ENCODE measurements at regions of chr1 and their contacts with region 1.

Region 1: DNA sequence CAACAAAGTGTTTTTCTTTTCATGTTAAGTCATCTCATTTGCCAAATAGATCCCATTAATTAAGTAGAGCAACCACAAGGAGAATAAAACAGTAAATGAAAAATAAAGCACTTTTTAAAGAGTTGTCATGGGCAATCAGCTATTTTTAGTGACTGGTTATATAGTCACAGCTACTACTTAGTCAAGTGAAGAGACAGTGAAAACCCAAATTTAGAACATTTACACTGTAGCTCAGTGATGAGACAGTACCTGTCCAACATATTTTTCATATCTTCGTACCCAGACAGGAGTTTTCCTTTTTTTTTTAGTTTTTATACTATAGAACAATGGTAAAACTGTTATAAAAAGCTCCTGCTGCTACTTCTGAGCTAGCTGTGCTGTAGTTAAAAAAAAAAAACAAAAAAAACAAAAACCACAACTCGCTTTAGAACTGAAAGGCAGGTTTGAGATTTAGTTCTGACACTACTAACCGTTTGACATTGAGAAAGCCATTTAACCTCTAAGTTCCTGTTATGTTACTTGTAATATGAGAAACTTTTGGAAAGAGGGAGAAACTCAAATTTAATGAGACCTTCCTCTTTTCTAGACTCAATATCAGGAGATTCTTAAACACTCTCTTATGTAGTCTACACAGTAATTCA is 777.5 kb downstream of the ADGRL2 start:
- DNase-seq: no peak
- ATAC-seq: no peak
- H3K4me3 ChIP-seq: no peak overlapping the region
- H3K27ac ChIP-seq: no peak overlapping the region
- H3K4me1 ChIP-seq: no peaks in the 10 kb centered on the region
- H3K27me3 ChIP-seq: no peaks in the 10 kb centered on the region
- CTCF ChIP-seq: no peak

Region 2: GRCh38 chr1:82348487-82348886 is 229.7 kb before region 1 on chr1:
- CTCF ChIA-PET with region 1: no interaction called
- POLR2A ChIA-PET with region 1: interaction called, 10 read pairs
- in situ Hi-C with region 1: no loop called
- intact Hi-C with region 1: no loop called
- DNase-seq: no peak
- ATAC-seq: no peak
- H3K4me3 ChIP-seq: no peak overlapping the region
- H3K27ac ChIP-seq: no peak overlapping the region
- H3K4me1 ChIP-seq: no peaks in the 10 kb centered on the region
- H3K27me3 ChIP-seq: no peaks in the 10 kb centered on the region
- CTCF ChIP-seq: no peak

Region 3: GRCh38 chr1:82534996-82535395 is 43.2 kb before region 1 on chr1:
- CTCF ChIA-PET with region 1: no interaction called
- POLR2A ChIA-PET with region 1: no interaction called
- in situ Hi-C with region 1: no loop called
- intact Hi-C with region 1: loop called (anchors 5 kb)
- DNase-seq: no peak
- ATAC-seq: no peak
- H3K4me3 ChIP-seq: no peak overlapping the region
- H3K27ac ChIP-seq: no peak overlapping the region
- H3K4me1 ChIP-seq: no peaks in the 10 kb centered on the region
- H3K27me3 ChIP-seq: no peaks in the 10 kb centered on the region
- CTCF ChIP-seq: no peak

Region 4: DNA sequence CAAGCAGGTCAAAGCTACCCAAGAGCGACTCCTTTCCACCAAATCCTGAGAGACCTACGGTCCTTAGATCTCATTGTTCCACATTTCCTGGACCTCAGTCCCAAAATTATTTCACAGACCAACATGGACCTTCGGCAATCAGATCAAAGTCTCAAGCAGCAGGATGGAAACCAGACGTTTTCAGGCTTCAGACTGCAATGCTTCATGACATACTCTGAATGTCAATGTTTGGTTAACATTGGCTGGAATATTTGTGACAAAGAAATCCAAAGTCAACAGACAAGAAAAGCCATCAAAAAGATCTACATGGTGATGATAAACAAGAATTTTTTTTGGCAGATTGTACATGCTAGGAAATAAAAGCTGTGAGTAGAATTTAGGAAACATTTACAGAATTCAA is 279.8 kb after region 1 on chr1:
- CTCF ChIA-PET with region 1: no interaction called
- POLR2A ChIA-PET with region 1: no interaction called
- in situ Hi-C with region 1: no loop called
- intact Hi-C with region 1: no loop called
- DNase-seq: no peak
- ATAC-seq: no peak
- H3K4me3 ChIP-seq: no peak overlapping the region
- H3K27ac ChIP-seq: no peak overlapping the region
- H3K4me1 ChIP-seq: no peaks in the 10 kb centered on the region
- H3K27me3 ChIP-seq: no peaks in the 10 kb centered on the region
- CTCF ChIP-seq: no peak

Region 5: DNA sequence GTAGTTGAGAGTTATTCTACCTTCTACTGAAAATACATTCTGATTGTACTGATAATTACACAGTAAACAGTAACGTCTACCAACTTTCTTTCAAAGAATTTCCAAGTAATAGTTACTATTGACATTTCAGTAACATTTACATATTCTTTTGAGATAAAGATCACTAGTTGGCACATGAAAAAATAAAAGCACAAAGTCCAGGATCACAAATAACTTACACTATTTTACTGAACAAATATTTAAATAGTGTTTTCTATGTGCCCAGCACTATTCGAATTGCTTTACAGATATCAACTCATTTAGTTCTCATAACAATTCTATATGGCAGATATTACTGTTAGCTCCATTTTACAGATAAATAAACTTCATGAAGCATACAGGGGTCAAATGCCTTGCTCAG is 1294.3 kb after region 1 on chr1:
- CTCF ChIA-PET with region 1: interaction called, 12 read pairs
- POLR2A ChIA-PET with region 1: no interaction called
- in situ Hi-C with region 1: no loop called
- intact Hi-C with region 1: no loop called
- DNase-seq: no peak
- ATAC-seq: no peak
- H3K4me3 ChIP-seq: no peak overlapping the region
- H3K27ac ChIP-seq: no peak overlapping the region
- H3K4me1 ChIP-seq: no peaks in the 10 kb centered on the region
- H3K27me3 ChIP-seq: no peaks in the 10 kb centered on the region
- CTCF ChIP-seq: no peak